WTC11 (cell line): ENCODE measurements at regions of chr1 and their contacts with region 1.

Region 1: DNA sequence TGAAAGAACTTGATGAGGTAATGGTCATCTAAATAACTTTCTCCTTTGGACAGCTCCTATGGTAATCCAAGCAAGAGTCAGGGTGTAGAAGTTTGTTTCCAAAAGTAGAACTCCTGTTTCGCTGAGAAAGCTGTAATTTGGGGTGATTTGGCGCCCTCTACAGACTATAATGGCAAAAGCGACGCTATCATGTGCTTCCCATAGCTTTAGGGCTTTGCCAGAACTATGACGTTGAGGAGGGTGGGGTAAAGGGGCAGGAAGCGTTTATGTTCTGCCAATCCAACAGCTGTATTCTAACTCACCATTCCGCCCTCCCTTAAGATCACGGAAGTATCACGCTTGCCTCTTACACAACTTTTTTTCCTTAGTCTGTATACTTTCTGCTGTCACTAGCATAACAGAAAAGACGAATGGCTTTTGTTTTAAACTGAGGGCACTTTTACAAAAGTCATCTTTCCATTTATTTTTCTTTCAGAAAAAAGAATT is at the start of gene FMO4:
- DNase-seq: peak; percentile 77
- ATAC-seq: peak; percentile 100
- H3K4me3 Mint-ChIP-seq: peak within 1 kb of the TSS; percentile 68
- H3K27ac Mint-ChIP-seq: peak within 1 kb of the TSS; percentile 91
- H3K4me1 Mint-ChIP-seq: peaks cover 36% of the 10 kb centered on the region
- H3K27me3 Mint-ChIP-seq: peaks cover 5% of the 10 kb centered on the region
- CTCF ChIP-seq: peak; percentile 42; the same call in 1 of the 2 replicates
- total RNA-seq, gene FMO4: 1.8 to 3.8 TPM (median 3.6 TPM) in 3 replicates

Region 2: GRCh38 chr1:171081314-171081753 is 232.5 kb before region 1 on chr1:
- CTCF ChIA-PET with region 1: interaction called, 45 read pairs
- POLR2A ChIA-PET with region 1: no interaction called
- DNase-seq: no peak
- ATAC-seq: no peak
- H3K4me3 Mint-ChIP-seq: no peak overlapping the region
- H3K27ac Mint-ChIP-seq: no peak overlapping the region; the same call in 1 of the 2 replicates
- H3K4me1 Mint-ChIP-seq: peaks cover 5% of the 10 kb centered on the region
- H3K27me3 Mint-ChIP-seq: no peaks in the 10 kb centered on the region
- CTCF ChIP-seq: no peak

Region 3: GRCh38 chr1:171127501-171127900 is 186.4 kb before region 1 on chr1:
- CTCF ChIA-PET with region 1: no interaction called
- POLR2A ChIA-PET with region 1: no interaction called
- DNase-seq: no peak
- ATAC-seq: no peak
- H3K4me3 Mint-ChIP-seq: no peak overlapping the region
- H3K27ac Mint-ChIP-seq: peak overlapping the region; percentile 10; the same call in 1 of the 2 replicates
- H3K4me1 Mint-ChIP-seq: no peaks in the 10 kb centered on the region; the same call in none of the 2 replicates
- H3K27me3 Mint-ChIP-seq: no peaks in the 10 kb centered on the region
- CTCF ChIP-seq: no peak

Region 4: GRCh38 chr1:171210355-171210754 is 103.5 kb before region 1 on chr1:
- CTCF ChIA-PET with region 1: interaction called, 11 read pairs
- POLR2A ChIA-PET with region 1: no interaction called
- DNase-seq: no peak
- ATAC-seq: peak; percentile 37
- H3K4me3 Mint-ChIP-seq: no peak overlapping the region
- H3K27ac Mint-ChIP-seq: no peak overlapping the region
- H3K4me1 Mint-ChIP-seq: peaks cover 46% of the 10 kb centered on the region
- H3K27me3 Mint-ChIP-seq: peaks cover 8% of the 10 kb centered on the region
- CTCF ChIP-seq: no peak

Region 5: GRCh38 chr1:171245458-171246064 is 68.3 kb before region 1 on chr1:
- CTCF ChIA-PET with region 1: interaction called, 83 read pairs
- POLR2A ChIA-PET with region 1: no interaction called
- DNase-seq: peak; percentile 36
- ATAC-seq: peak; percentile 90
- H3K4me3 Mint-ChIP-seq: no peak overlapping the region
- H3K27ac Mint-ChIP-seq: no peak overlapping the region
- H3K4me1 Mint-ChIP-seq: peaks cover 18% of the 10 kb centered on the region
- H3K27me3 Mint-ChIP-seq: peaks cover 25% of the 10 kb centered on the region
- CTCF ChIP-seq: peak; percentile 40

Region 6: DNA sequence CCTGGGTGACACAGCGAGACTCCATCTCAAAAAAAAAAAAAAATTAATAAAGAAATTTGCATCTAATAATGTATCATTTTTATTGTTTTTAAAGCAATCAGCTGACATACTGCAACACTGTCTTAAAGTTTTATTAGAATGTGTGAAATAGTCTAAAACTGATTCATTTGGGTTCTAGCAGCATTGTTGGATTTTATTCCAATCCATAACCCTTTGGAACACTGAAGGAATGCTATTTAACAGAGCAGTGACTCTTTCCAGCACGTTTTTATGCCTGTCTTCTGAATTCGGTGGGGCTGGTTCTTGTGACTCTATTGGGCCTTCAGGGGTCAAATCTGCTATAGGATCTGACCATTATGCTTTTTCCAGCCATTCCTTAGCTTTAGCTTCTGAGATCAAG is 18.1 kb before region 1 on chr1:
- CTCF ChIA-PET with region 1: interaction called, 43 read pairs
- POLR2A ChIA-PET with region 1: interaction called, 3 read pairs
- DNase-seq: no peak
- ATAC-seq: no peak
- H3K4me3 Mint-ChIP-seq: no peak overlapping the region
- H3K27ac Mint-ChIP-seq: no peak overlapping the region
- H3K4me1 Mint-ChIP-seq: peaks cover 63% of the 10 kb centered on the region
- H3K27me3 Mint-ChIP-seq: no peaks in the 10 kb centered on the region
- CTCF ChIP-seq: no peak